Left cardiac atrium (tissue), 4 donors: ENCODE measurements at regions of chr6 and their contacts with region 1.

Region 1: DNA sequence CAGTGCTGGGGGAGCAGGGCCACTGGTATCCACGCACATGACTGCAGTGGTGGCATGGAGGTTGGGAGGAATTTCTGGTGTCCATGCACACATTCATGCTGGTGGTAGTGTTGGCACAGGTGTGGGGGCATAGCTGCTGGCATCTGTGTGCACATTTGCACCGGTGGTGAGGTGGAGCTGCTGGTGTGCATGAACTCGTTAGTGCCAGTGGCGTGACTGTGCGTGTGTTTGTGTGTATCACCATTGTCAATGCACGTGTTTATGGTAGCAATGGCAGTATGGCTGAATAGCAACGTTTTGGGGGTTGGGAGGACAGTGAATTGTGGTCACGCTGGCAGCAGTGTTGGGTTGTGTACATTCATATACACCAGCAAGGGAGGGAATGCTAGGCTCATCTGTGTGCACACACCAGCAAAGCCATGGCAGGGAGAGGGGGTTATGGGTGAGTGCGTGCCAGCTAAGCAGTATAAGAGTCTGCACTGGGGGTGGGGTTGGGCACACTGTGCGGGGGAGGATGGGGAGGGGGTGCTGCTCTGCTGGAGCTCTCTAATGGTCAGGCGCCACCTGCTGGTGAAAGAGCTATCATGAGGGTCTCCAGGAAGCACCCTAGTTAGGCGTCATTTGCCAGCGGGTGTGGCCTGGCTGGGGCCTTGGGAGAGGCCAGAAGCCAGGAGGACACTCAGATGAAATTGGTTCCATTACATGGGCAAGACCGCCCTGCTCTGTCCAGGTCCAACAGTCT is 626.1 kb upstream of the ID4 start:
- DNase-seq: peak; percentile 37
- ATAC-seq: no peak

Region 2: DNA sequence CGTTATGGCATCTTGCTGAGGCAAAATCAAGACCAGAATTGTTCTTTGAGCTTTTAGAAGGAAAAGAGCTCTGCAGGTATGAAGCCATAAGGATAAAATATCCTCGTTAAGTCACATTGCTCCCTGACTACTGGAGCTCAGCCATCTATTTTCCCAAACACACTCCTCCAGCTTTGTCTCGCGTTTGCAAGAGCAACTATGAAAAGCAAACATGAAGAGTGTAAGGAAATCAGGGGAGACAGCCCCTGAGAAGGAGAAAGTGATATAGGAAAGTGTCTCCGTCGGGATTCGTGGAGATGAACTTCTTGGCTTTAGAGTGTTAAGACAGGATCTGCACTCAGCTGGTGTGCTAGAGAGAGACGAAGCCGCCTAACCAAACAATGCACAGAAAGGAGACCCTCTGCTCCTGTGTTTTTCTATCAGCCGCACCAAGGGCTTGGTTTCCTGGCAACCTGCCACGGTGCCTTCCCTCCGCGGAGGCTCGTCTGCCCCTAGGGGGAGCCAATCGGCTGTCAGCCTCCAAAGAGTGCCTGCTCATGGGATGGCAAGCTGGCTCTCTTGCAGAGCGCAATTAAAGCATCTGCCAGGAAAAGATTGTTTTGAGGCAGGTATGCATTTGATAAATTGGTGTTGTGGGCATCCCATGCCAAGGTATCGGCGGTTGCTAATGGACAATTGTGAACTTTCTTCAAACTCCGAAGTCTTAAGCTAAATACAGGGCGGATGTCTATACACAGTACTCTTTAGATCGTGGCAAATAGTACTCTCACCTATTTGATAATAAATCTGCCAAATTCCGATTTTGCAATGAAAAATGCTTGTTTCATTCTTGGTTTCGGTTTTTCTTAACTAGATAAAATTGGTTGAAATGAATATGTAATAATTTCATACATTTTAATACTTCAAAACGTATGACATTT is 220.7 kb before region 1 on chr6:
- intact Hi-C with region 1: no loop called
- DNase-seq: peak; percentile 83
- ATAC-seq: peak; percentile 67 to 71

Region 3: GRCh38 chr6:19024737-19025136 is 186.3 kb before region 1 on chr6:
- intact Hi-C with region 1: loop called in 1 of 2 experiments (anchors 5 kb)
- DNase-seq: no peak
- ATAC-seq: peak; percentile 34 to 70

Region 4: DNA sequence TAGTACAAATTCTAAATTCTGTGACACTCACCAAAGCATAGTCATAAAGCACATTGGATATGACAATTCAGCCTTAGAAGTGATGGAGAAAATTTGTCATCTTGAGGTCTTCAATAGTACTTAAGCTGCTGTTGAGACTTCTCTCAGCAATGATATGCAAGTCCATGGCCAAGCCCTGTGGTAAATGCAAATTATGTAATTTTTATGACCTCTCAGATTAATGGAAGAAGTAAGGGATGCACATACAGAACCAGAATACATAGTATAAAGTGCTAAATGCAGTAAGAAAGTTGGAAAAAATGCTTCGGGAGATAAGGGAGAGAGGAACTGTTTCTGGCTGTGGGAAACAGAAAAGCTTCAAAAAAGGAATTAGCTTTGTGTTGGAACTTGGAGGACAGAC is 123.1 kb before region 1 on chr6:
- intact Hi-C with region 1: no loop called
- DNase-seq: no peak
- ATAC-seq: no peak